K562 (cell line): ENCODE measurements at regions of chr7 and their contacts with region 1.

Region 1: GRCh38 chr7:75738987-75739795 is 450 bp upstream of the HIP1 start:
- DNase-seq: peak; percentile 99 to 100 (median 100)
- ATAC-seq: peak; percentile 95
- H3K4me3 ChIP-seq: peak overlapping the region; percentile 84
- H3K27ac ChIP-seq: peak overlapping the region; percentile 76
- H3K4me1 ChIP-seq: peaks cover 44 to 51% of the 10 kb centered on the region in 2 experiments
- H3K27me3 ChIP-seq: no peaks in the 10 kb centered on the region
- CTCF ChIP-seq: no peak; a peak in 1 of 6 replicates
- EP300 ChIP-seq: peak; percentile 36; the same call in 1 of the 2 replicates
- POLR2A ChIP-seq: peak; percentile 62
- RAD21 ChIP-seq: no peak; a peak in 1 of 4 replicates

Region 2: GRCh38 chr7:74121401-74122249 is 1617.6 kb before region 1 on chr7:
- CTCF ChIA-PET with region 1: no interaction called
- POLR2A ChIA-PET with region 1: no interaction called
- in situ Hi-C with region 1: no loop called
- intact Hi-C with region 1: no loop called
- DNase-seq: no peak
- ATAC-seq: no peak
- H3K4me3 ChIP-seq: no peak overlapping the region
- H3K27ac ChIP-seq: no peak overlapping the region
- H3K4me1 ChIP-seq: peaks cover 0 to 12% of the 10 kb centered on the region in 2 experiments; a peak in 1 of 5 replicates
- H3K27me3 ChIP-seq: no peaks in the 10 kb centered on the region
- CTCF ChIP-seq: no peak
- EP300 ChIP-seq: no peak
- POLR2A ChIP-seq: no peak
- RAD21 ChIP-seq: no peak

Region 3: GRCh38 chr7:75667938-75668337 is 71.3 kb before region 1 on chr7:
- CTCF ChIA-PET with region 1: no interaction called
- POLR2A ChIA-PET with region 1: interaction called, 4 read pairs
- in situ Hi-C with region 1: no loop called
- intact Hi-C with region 1: loop called (anchors 5 kb)
- DNase-seq: no peak
- ATAC-seq: no peak
- H3K4me3 ChIP-seq: no peak overlapping the region
- H3K27ac ChIP-seq: no peak overlapping the region
- H3K4me1 ChIP-seq: peaks cover 16 to 26% of the 10 kb centered on the region in 2 experiments
- H3K27me3 ChIP-seq: no peaks in the 10 kb centered on the region
- CTCF ChIP-seq: no peak
- EP300 ChIP-seq: no peak
- POLR2A ChIP-seq: no peak
- RAD21 ChIP-seq: no peak

Region 4: GRCh38 chr7:75756991-75757676 is 17.9 kb after region 1 on chr7:
- CTCF ChIA-PET with region 1: no interaction called
- POLR2A ChIA-PET with region 1: interaction called, 10 read pairs
- in situ Hi-C with region 1: no loop called
- intact Hi-C with region 1: no loop called
- DNase-seq: peak; percentile 60 to 69 (median 63)
- ATAC-seq: peak; percentile 87
- H3K4me3 ChIP-seq: no peak overlapping the region
- H3K27ac ChIP-seq: no peak overlapping the region
- H3K4me1 ChIP-seq: peaks cover 3% of the 10 kb centered on the region in 2 experiments; a peak in 3 of 5 replicates
- H3K27me3 ChIP-seq: no peaks in the 10 kb centered on the region
- CTCF ChIP-seq: peak; percentile 57 to 64 (median 62)
- EP300 ChIP-seq: no peak
- POLR2A ChIP-seq: no peak
- RAD21 ChIP-seq: peak; percentile 22 to 67; a peak in 3 of 4 replicates

Region 5: DNA sequence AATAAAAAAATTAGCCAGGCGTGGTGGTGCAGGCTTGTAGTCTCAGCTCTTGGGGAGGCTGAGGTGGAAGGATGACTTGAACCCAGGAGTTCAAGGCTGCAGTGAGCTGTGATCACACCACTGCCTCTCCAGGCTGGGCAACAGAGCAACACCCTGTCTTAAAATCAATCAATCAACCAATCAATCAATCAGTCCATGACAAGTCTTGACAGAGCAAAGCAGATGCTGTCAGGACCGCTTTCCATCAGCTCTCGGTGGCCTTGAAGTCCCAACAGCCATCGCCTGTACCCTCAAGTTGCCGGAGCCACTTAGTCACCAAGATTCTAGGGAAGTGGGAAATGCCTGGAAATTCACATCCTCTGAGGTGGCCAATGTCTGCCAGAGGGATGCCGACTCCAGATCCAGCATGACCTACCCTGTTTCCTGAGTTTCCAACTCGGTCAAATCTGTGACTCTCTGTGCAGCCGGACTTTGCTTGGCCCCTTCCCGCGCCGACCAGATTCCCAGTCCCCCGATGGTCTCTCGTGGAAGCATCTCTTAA is 75.3 kb after region 1 on chr7:
- CTCF ChIA-PET with region 1: no interaction called
- POLR2A ChIA-PET with region 1: no interaction called
- in situ Hi-C with region 1: no loop called
- intact Hi-C with region 1: no loop called
- DNase-seq: no peak
- ATAC-seq: no peak
- H3K4me3 ChIP-seq: no peak overlapping the region
- H3K27ac ChIP-seq: no peak overlapping the region
- H3K4me1 ChIP-seq: peaks cover 11 to 16% of the 10 kb centered on the region in 2 experiments
- H3K27me3 ChIP-seq: no peaks in the 10 kb centered on the region; a peak in 2 of 5 replicates
- CTCF ChIP-seq: no peak
- EP300 ChIP-seq: no peak
- POLR2A ChIP-seq: no peak
- RAD21 ChIP-seq: no peak